Activated CD4-positive, alpha-beta T cell treated with anti-CD3 and anti-CD28 coated beads for 36 hours (primary cell): ENCODE measurements at regions of chr15 and their contacts with region 1.

Region 1: DNA sequence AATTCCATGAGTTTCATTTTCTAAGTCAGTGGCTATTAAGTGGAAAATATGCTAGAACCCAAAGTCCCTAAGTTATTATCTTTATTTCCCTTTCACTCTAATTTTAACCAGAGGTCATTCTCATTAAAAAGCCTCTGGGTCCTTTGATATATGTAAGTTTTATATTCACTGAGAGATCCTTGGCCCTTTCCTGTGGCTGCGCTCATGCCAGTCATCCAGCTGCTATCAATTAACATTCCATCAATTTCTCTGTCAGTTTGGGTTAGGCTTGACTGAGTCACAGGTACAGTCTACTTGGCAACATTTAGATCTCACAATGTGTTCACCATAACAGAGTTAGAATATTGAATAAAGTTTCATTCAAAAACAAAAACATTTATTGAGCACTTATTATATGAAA is 58.0 kb upstream of the FBN1 start:
- DNase-seq: no peak
- ATAC-seq: no peak
- H3K4me3 Mint-ChIP-seq: no peak overlapping the region
- H3K27ac Mint-ChIP-seq: no peak overlapping the region
- H3K4me1 Mint-ChIP-seq: no peaks in the 10 kb centered on the region
- H3K27me3 Mint-ChIP-seq: no peaks in the 10 kb centered on the region

Region 2: DNA sequence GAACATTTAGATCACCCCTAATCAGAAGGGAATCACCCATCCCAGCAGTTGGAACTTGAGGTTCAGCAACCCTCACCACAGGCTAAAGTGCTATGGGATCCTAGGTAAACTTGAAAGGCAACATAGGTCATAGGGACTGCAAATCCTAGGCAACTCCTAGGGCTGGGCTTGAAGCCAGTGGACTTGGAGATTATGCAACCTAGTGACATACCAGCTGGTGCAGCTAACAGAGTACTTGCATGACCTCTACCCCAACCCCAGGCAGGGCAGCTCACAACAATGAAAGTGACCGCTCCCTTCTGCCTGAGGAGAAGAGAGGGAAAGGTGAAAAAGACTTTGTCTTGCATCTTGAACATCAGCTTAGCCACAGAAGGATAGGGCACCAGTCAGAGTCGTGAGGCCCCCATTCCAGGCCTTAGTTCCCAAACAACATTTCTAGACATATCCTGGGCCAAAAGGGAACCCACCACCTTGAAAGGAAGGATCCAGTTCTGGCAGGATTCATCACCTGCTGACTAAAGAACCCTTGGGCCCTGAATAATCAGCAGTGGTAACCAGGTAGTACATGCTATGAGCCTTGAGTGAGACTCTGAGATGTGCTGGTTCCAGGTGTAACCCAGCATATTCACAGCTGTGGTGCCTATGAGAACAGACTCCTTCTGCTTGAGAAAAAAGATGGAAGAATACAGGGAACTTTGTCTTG is 20.4 kb before region 1 on chr15:
- CTCF ChIA-PET with region 1: no interaction called
- POLR2A ChIA-PET with region 1: no interaction called
- intact Hi-C with region 1: loop called in 1 of 2 experiments (anchors 2 kb)
- DNase-seq: no peak
- ATAC-seq: no peak
- H3K4me3 Mint-ChIP-seq: no peak overlapping the region
- H3K27ac Mint-ChIP-seq: no peak overlapping the region
- H3K4me1 Mint-ChIP-seq: no peaks in the 10 kb centered on the region
- H3K27me3 Mint-ChIP-seq: peaks cover 2% of the 10 kb centered on the region